Activated CD8-positive, alpha-beta T cell treated with anti-CD3 and anti-CD28 coated beads for 36 hours (primary cell): ENCODE measurements at regions of chr19 and their contacts with region 1.

Region 1: GRCh38 chr19:35352448-35353304 is 5.0 kb downstream of the FFAR1 start:
- DNase-seq: peak; percentile 82
- ATAC-seq: peak; percentile 87
- H3K4me3 Mint-ChIP-seq: no peak overlapping the region
- H3K27ac Mint-ChIP-seq: no peak overlapping the region
- H3K4me1 Mint-ChIP-seq: peaks cover 16% of the 10 kb centered on the region
- H3K27me3 Mint-ChIP-seq: peaks cover 2% of the 10 kb centered on the region
- CTCF ChIP-seq: peak; percentile 95

Region 2: GRCh38 chr19:35462476-35462953 is 109.8 kb after region 1 on chr19:
- CTCF ChIA-PET with region 1: interaction called, 42 read pairs
- POLR2A ChIA-PET with region 1: no interaction called
- intact Hi-C with region 1: no loop called
- DNase-seq: peak; percentile 64
- ATAC-seq: peak; percentile 91
- H3K4me3 Mint-ChIP-seq: peak overlapping the region; percentile 13
- H3K27ac Mint-ChIP-seq: peak overlapping the region; percentile 82
- H3K4me1 Mint-ChIP-seq: peaks cover 24% of the 10 kb centered on the region
- H3K27me3 Mint-ChIP-seq: no peaks in the 10 kb centered on the region
- CTCF ChIP-seq: no peak